ENCODE measurements at regions of chr2 and their contacts with region 1.

Region 1: GRCh38 chr2:190849774-190850173 is 30.8 kb upstream of the GLS start:
- DNase-seq: no peak
- H3K4me3 ChIP-seq: no peak overlapping the region
- H3K4me3 Mint-ChIP-seq: no peak overlapping the region
- H3K27ac ChIP-seq: no peak overlapping the region
- H3K27ac Mint-ChIP-seq: no peak overlapping the region
- H3K4me1 ChIP-seq: no peaks in the 10 kb centered on the region
- H3K4me1 Mint-ChIP-seq: peaks cover 0 to 3% (median 2%) of the 10 kb centered on the region in 3 donors
- H3K27me3 ChIP-seq: no peaks in the 10 kb centered on the region
- H3K27me3 Mint-ChIP-seq: no peaks in the 10 kb centered on the region

Region 2: DNA sequence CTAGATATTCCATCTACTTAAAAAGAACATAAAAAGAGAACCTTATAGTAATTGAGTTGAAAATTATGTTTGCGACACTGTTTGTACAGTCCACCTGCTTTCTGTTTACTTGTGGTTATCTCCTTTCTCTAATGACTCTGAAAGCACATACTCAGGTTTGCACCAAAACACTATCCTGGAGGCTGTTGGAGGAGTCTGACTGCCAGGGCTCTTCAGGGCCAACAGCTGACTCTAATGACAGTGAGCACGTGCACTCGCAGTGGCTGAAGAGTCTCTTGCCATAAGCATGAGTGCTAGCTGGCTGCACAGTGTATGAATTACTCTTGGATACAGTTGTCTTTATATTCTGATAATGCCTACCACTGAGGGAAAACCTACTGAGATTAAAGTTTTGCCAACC is 14.2 kb after region 1 on chr2:
- CTCF ChIA-PET with region 1: interaction called, 15 read pairs
- POLR2A ChIA-PET with region 1: interaction called, 3 read pairs
- DNase-seq: no peak
- H3K4me3 ChIP-seq: no peak overlapping the region
- H3K4me3 Mint-ChIP-seq: no peak overlapping the region
- H3K27ac ChIP-seq: no peak overlapping the region
- H3K27ac Mint-ChIP-seq: peak overlapping the region in 2 of 8 donors; percentile 49 to 77
- H3K4me1 ChIP-seq: peaks cover 18% of the 10 kb centered on the region
- H3K4me1 Mint-ChIP-seq: peaks cover 20 to 26% (median 25%) of the 10 kb centered on the region in 3 donors
- H3K27me3 ChIP-seq: no peaks in the 10 kb centered on the region
- H3K27me3 Mint-ChIP-seq: no peaks in the 10 kb centered on the region

Region 3: DNA sequence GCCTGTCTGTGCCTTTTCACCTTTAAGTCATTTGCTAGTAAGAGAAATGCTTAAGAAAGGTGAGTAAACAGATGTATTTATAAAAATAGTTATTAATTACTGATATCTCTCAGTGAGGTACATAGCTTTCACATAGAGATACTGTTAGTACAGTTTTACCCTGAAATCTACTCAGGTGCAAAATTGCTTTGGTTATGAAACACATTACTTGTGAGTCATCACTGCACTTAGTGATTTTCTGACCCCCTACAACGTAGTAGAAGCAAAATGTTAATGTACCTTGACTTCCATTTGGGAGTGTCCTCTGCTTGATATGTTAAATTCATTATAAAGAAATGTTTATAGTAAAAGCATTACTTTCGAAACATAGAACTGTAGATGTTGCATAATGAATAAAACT is 37.3 kb after region 1 on chr2:
- CTCF ChIA-PET with region 1: interaction called, 30 read pairs
- POLR2A ChIA-PET with region 1: interaction called, 20 read pairs
- DNase-seq: no peak
- H3K4me3 ChIP-seq: no peak overlapping the region
- H3K4me3 Mint-ChIP-seq: peak overlapping the region in 5 of 7 donors; percentile 63 to 76 (median 68)
- H3K27ac ChIP-seq: no peak overlapping the region
- H3K27ac Mint-ChIP-seq: peak overlapping the region in 2 of 8 donors; percentile 44 to 77
- H3K4me1 ChIP-seq: peaks cover 80% of the 10 kb centered on the region
- H3K4me1 Mint-ChIP-seq: peaks cover 74 to 97% (median 90%) of the 10 kb centered on the region in 3 donors
- H3K27me3 ChIP-seq: no peaks in the 10 kb centered on the region
- H3K27me3 Mint-ChIP-seq: no peaks in the 10 kb centered on the region

Region 4: GRCh38 chr2:190947711-190948251 is 98.0 kb after region 1 on chr2:
- CTCF ChIA-PET with region 1: interaction called, 13 read pairs
- POLR2A ChIA-PET with region 1: interaction called, 3 read pairs
- DNase-seq: peak in 2 of 5 donors; percentile 44 to 72
- H3K4me3 ChIP-seq: no peak overlapping the region
- H3K4me3 Mint-ChIP-seq: peak overlapping the region in 6 of 7 donors; percentile 0 to 71 (median 36)
- H3K27ac ChIP-seq: no peak overlapping the region
- H3K27ac Mint-ChIP-seq: peak overlapping the region; percentile 31 to 98 (median 86)
- H3K4me1 ChIP-seq: peaks cover 28% of the 10 kb centered on the region
- H3K4me1 Mint-ChIP-seq: peaks cover 10 to 33% (median 22%) of the 10 kb centered on the region in 3 donors
- H3K27me3 ChIP-seq: no peaks in the 10 kb centered on the region
- H3K27me3 Mint-ChIP-seq: no peaks in the 10 kb centered on the region

Region 5: GRCh38 chr2:191029280-191029950 is 179.6 kb after region 1 on chr2:
- CTCF ChIA-PET with region 1: interaction called, 12 read pairs
- POLR2A ChIA-PET with region 1: no interaction called
- DNase-seq: no peak
- H3K4me3 ChIP-seq: peak overlapping the region; percentile 24
- H3K4me3 Mint-ChIP-seq: peak overlapping the region in 6 of 7 donors; percentile 11 to 38 (median 24)
- H3K27ac ChIP-seq: no peak overlapping the region
- H3K27ac Mint-ChIP-seq: peak overlapping the region; percentile 3 to 93 (median 72)
- H3K4me1 ChIP-seq: peaks cover 30% of the 10 kb centered on the region
- H3K4me1 Mint-ChIP-seq: peaks cover 33 to 55% (median 40%) of the 10 kb centered on the region in 3 donors
- H3K27me3 ChIP-seq: no peaks in the 10 kb centered on the region
- H3K27me3 Mint-ChIP-seq: no peaks in the 10 kb centered on the region

Measured in CD8-positive, alpha-beta memory T cell (primary cell).